Right cardiac atrium (tissue), 5 donors: ENCODE measurements at regions of chr5 and their contacts with region 1.

Region 1: DNA sequence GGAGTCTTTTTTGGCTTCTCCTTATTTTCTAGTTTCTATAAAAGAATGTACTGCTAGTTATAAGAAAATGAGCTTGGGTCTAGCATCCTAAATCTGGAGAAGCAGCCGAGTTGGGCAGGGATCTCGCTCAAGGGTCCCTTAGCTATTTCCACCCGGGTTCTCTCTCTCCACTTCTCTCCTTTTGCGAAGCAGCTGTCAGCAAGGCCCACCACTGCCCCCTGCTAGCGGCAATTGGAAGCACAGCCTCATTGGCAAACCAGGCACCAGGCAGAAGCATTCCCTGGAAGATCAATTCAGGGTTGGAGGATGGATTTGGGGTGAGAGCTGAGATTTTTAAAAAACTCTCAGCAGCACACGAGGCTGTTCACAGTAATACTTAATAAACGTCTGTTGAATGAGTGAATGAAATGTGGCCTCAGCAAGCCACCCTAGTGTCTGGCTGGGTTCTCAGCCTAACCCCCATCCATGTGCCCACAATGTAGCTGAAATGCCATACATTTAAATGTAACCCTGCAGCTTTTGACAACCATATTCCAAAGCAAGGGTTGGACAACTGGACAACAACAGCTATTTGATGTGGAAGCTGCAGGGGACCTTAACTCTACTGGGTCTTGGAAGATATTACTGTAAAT is 34.6 kb upstream of the TNIP1 start:
- DNase-seq: peak; percentile 76 to 91 (median 87)
- ATAC-seq: peak; percentile 61 to 65
- H3K4me3 ChIP-seq: no peak overlapping the region
- H3K27ac ChIP-seq: peak overlapping the region; percentile 6
- H3K4me1 ChIP-seq: no peaks in the 10 kb centered on the region
- H3K27me3 ChIP-seq: no peaks in the 10 kb centered on the region

Region 2: GRCh38 chr5:151051066-151051930 is 64.1 kb before region 1 on chr5:
- intact Hi-C with region 1: loop called (anchors 2 kb)
- DNase-seq: peak; percentile 84 to 94 (median 91)
- ATAC-seq: peak; percentile 81 to 88
- H3K4me3 ChIP-seq: no peak overlapping the region
- H3K27ac ChIP-seq: no peak overlapping the region
- H3K4me1 ChIP-seq: peaks cover 5% of the 10 kb centered on the region
- H3K27me3 ChIP-seq: no peaks in the 10 kb centered on the region